Activated naive CD4-positive, alpha-beta T cell treated with anti-CD3 and anti-CD28 coated beads for 36 hours (primary cell): ENCODE measurements at regions of chr10 and their contacts with region 1.

Region 1: DNA sequence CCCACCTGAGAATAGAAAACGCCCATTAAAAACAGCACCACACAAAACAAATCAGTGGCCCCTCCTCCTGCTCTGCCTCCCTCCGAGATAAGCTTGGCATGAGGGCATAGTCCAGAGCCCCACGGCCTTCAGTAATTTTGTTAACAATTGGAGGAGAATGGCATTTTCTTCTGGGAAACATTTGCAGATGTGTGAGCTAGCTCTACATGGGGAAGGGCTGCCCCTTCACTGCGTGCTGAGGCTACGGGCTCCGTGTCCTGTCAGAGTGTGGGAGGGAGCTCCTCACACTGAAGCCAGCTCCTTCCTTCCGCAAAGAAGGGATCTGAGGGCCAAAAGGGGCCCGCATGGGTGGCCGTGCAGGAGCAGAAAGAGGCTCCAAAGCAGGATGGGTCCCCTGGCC is 15.2 kb downstream of the GRK5 start:
- DNase-seq: no peak
- H3K4me3 Mint-ChIP-seq: no peak overlapping the region
- H3K27ac Mint-ChIP-seq: no peak overlapping the region
- H3K4me1 Mint-ChIP-seq: peaks cover 22% of the 10 kb centered on the region
- H3K27me3 Mint-ChIP-seq: no peaks in the 10 kb centered on the region

Region 2: GRCh38 chr10:119233821-119234220 is 11.3 kb after region 1 on chr10:
- CTCF ChIA-PET with region 1: interaction called, 3 read pairs
- intact Hi-C with region 1: loop called (anchors 1 kb)
- DNase-seq: no peak
- H3K4me3 Mint-ChIP-seq: no peak overlapping the region
- H3K27ac Mint-ChIP-seq: peak overlapping the region; percentile 68
- H3K4me1 Mint-ChIP-seq: peaks cover 72% of the 10 kb centered on the region
- H3K27me3 Mint-ChIP-seq: no peaks in the 10 kb centered on the region

Region 3: DNA sequence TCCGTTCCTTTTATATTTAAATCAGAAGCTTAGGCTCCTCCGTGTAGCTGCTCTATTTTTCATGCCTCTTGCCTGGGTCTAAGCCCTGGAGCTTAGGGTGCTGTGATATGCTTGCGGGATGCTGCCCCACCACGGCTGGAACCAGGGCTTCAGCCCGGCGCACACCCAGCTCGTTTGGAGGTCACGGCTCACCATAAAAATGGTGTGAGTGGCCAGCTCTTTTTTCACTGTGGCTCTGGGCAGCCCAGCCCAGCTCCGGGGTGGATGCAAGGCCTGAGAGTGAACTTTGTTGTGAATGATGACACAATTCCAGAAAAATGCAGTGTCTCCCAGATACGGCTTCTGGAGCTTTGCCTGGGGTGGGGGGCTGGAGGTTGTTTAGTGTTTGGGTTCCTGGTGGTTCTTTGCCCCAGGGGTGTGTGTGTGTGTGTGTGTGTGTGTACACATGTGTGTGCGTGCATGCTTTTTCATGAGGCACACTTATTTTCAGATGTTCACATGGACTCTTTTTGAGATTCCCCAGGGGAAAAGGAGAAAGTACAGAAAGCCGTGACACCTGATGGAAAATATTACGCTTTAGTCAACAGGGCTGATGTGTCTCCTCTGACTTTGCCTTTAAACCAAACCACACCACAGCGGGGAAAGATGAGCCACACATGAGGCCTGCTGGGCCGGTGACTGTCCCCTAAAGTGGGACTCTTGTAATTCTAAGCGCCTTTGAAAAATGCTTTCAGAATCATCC is 31.1 kb after region 1 on chr10:
- CTCF ChIA-PET with region 1: interaction called, 4 read pairs
- intact Hi-C with region 1: loop called (anchors 2 kb)
- DNase-seq: peak; percentile 82
- H3K4me3 Mint-ChIP-seq: no peak overlapping the region
- H3K27ac Mint-ChIP-seq: peak overlapping the region; percentile 88
- H3K4me1 Mint-ChIP-seq: peaks cover 55% of the 10 kb centered on the region
- H3K27me3 Mint-ChIP-seq: no peaks in the 10 kb centered on the region

Region 4: DNA sequence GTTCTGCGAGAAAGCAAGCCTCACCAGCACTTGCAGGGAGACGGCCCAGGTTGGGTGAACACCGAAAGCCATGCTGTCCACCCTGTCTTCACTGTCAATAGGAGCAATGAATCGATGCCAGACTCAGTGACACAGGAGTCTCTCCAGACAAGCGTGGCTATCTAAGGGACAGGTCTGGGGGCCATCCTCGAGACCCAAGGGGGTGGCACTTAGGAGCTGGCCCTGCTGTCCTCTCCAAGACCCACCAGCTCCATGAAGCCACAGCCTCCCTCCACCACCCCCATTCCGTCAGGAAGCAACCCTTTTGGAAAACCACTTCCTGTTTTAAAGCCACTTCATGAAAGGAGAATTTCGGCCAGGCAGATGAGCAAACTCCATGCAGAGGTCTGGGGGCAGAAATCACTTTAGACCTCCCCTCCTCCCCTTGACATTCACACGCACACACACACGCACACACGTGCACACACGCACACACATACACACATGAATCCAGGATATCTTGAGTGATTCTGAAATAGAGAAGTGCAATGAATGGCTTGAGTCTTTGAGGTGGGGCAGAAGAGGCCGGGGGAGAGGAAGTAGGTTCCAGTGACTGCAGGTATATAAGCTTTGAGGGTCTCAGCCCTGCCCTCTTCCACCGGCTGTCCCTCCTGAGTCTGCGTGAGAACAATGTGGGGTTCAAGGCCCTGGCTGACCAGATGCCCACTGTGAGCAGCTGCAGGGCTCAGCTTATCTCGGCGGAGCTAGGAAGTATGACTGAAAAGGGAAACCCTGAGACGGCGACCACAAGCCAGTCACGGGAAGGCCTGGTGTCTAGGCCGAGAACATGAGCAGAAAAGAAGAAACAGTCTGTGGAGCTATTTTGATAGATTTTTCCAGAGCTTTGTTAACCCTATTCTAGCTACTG is 295.0 kb after region 1 on chr10:
- CTCF ChIA-PET with region 1: no interaction called
- intact Hi-C with region 1: no loop called
- DNase-seq: peak; percentile 83
- H3K4me3 Mint-ChIP-seq: peak overlapping the region; percentile 43
- H3K27ac Mint-ChIP-seq: peak overlapping the region; percentile 90
- H3K4me1 Mint-ChIP-seq: peaks cover 70% of the 10 kb centered on the region
- H3K27me3 Mint-ChIP-seq: no peaks in the 10 kb centered on the region